ENCODE measurements at regions of chr11 and their contacts with region 1.

Region 1: GRCh38 chr11:14907411-14908213 is 15.6 kb upstream of the CYP2R1 start:
- DNase-seq: peak; percentile 50 to 90 (median 78)
- ATAC-seq: peak; percentile 54 to 66 (median 56)
- H3K4me3 ChIP-seq: no peak overlapping the region
- H3K4me3 Mint-ChIP-seq: no peak overlapping the region
- H3K27ac ChIP-seq: peak overlapping the region; percentile 22
- H3K27ac Mint-ChIP-seq: peak overlapping the region; percentile 7 to 71
- H3K4me1 ChIP-seq: peaks cover 0 to 28% of the 10 kb centered on the region in 2 experiments
- H3K4me1 Mint-ChIP-seq: peaks cover 40 to 46% (median 46%) of the 10 kb centered on the region in 3 donors
- H3K27me3 ChIP-seq: no peaks in the 10 kb centered on the region
- H3K27me3 Mint-ChIP-seq: no peaks in the 10 kb centered on the region

Region 2: GRCh38 chr11:14454861-14455632 is 452.6 kb before region 1 on chr11:
- CTCF ChIA-PET with region 1: interaction called in 1 of 2 experiments, 11 read pairs
- POLR2A ChIA-PET with region 1: no interaction called
- DNase-seq: peak in 2 of 35 experiments; percentile 8 to 58
- ATAC-seq: peak in 2 of 4 experiments; percentile 16 to 52
- H3K4me3 ChIP-seq: no peak overlapping the region
- H3K4me3 Mint-ChIP-seq: no peak overlapping the region
- H3K27ac ChIP-seq: no peak overlapping the region
- H3K27ac Mint-ChIP-seq: no peak overlapping the region
- H3K4me1 ChIP-seq: peaks cover 0 to 4% of the 10 kb centered on the region in 2 experiments
- H3K4me1 Mint-ChIP-seq: peaks cover 0 to 5% (median 0%) of the 10 kb centered on the region in 3 donors
- H3K27me3 ChIP-seq: no peaks in the 10 kb centered on the region
- H3K27me3 Mint-ChIP-seq: no peaks in the 10 kb centered on the region

Region 3: DNA sequence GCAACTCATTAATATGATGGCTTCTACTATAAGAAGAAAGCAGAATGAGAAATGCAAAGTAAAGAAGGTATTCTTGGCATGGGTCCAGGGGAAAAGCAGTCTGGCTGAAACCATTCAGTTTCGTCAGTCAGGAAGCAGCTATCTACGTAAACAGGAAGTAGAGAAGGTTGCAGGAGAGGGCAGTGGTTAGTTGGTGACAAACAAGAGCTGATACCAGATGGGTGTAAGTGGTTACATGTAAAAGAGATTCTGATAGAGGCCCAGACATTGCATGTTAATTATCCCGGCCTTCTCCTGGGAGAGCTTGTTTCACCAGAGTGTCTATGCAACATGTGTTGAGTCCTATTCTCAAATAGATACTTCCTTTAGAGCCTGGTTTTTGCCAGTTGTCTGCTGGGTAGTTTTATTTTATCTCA is 329.1 kb before region 1 on chr11:
- CTCF ChIA-PET with region 1: interaction called in 1 of 2 experiments, 13 read pairs
- POLR2A ChIA-PET with region 1: no interaction called
- DNase-seq: peak; percentile 26 to 96 (median 70)
- ATAC-seq: peak; percentile 98 to 99 (median 98)
- H3K4me3 ChIP-seq: no peak overlapping the region
- H3K4me3 Mint-ChIP-seq: peak overlapping the region; percentile 45 to 63 (median 50)
- H3K27ac ChIP-seq: peak overlapping the region; percentile 91
- H3K27ac Mint-ChIP-seq: peak overlapping the region; percentile 88 to 93
- H3K4me1 ChIP-seq: peaks cover 22 to 35% of the 10 kb centered on the region in 2 experiments
- H3K4me1 Mint-ChIP-seq: peaks cover 60 to 71% (median 68%) of the 10 kb centered on the region in 3 donors
- H3K27me3 ChIP-seq: no peaks in the 10 kb centered on the region
- H3K27me3 Mint-ChIP-seq: no peaks in the 10 kb centered on the region

Region 4: GRCh38 chr11:14789879-14790484 is 117.6 kb before region 1 on chr11:
- CTCF ChIA-PET with region 1: interaction called, 31 to 88 read pairs
- POLR2A ChIA-PET with region 1: no interaction called
- DNase-seq: peak in 1 of 35 experiments; percentile 49
- ATAC-seq: peak in 1 of 4 experiments; percentile 59
- H3K4me3 ChIP-seq: no peak overlapping the region
- H3K4me3 Mint-ChIP-seq: no peak overlapping the region
- H3K27ac ChIP-seq: no peak overlapping the region
- H3K27ac Mint-ChIP-seq: peak overlapping the region in 1 of 2 donors; percentile 47
- H3K4me1 ChIP-seq: no peaks in the 10 kb centered on the region
- H3K4me1 Mint-ChIP-seq: peaks cover 5 to 40% (median 21%) of the 10 kb centered on the region in 3 donors
- H3K27me3 ChIP-seq: no peaks in the 10 kb centered on the region
- H3K27me3 Mint-ChIP-seq: no peaks in the 10 kb centered on the region

Region 5: DNA sequence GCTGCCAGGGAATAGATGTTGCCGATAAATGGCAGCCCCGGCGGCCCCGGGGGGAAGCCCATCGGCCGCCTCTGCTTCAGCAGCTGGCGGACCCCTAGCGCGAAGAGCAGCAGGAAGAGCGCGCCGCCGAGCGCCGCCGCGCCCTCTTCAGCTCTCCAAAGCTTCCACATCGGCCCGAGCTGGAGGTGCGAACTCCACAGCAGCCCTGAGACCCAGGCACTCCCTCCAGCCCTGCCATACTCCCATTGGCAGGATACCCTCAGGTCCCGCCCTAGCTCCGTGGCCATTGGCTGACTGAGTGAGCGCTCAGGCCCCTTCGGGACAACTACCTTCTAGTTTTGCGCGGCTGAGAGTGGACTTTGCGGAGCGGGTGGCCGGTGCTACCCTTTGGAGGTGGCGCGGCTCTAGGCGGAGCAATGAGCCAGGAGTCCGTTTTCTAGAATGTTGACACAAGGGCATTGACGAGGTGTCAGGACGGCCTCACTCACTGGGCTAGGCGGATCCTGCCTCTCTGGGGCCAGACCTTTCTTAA is 15.5 kb before region 1 on chr11 and contains the start of gene CYP2R1:
- CTCF ChIA-PET with region 1: interaction called, 18 to 61 read pairs
- POLR2A ChIA-PET with region 1: interaction called in 1 of 2 experiments, 5 read pairs
- DNase-seq: peak; percentile 78 to 93 (median 87)
- ATAC-seq: peak; percentile 89 to 90 (median 89)
- H3K4me3 ChIP-seq: peak within 1 kb of the TSS; percentile 65 to 80
- H3K4me3 Mint-ChIP-seq: peak within 1 kb of the TSS; percentile 95 to 98 (median 97)
- H3K27ac ChIP-seq: peak within 1 kb of the TSS; percentile 76
- H3K27ac Mint-ChIP-seq: peak within 1 kb of the TSS; percentile 95 to 96
- H3K4me1 ChIP-seq: peaks cover 14 to 24% of the 10 kb centered on the region in 2 experiments
- H3K4me1 Mint-ChIP-seq: peaks cover 44 to 50% (median 47%) of the 10 kb centered on the region in 3 donors
- H3K27me3 ChIP-seq: no peaks in the 10 kb centered on the region
- H3K27me3 Mint-ChIP-seq: no peaks in the 10 kb centered on the region
- total RNA-seq, gene CYP2R1: 17.9 to 23.3 (median 19.1) TPM

Region 6: DNA sequence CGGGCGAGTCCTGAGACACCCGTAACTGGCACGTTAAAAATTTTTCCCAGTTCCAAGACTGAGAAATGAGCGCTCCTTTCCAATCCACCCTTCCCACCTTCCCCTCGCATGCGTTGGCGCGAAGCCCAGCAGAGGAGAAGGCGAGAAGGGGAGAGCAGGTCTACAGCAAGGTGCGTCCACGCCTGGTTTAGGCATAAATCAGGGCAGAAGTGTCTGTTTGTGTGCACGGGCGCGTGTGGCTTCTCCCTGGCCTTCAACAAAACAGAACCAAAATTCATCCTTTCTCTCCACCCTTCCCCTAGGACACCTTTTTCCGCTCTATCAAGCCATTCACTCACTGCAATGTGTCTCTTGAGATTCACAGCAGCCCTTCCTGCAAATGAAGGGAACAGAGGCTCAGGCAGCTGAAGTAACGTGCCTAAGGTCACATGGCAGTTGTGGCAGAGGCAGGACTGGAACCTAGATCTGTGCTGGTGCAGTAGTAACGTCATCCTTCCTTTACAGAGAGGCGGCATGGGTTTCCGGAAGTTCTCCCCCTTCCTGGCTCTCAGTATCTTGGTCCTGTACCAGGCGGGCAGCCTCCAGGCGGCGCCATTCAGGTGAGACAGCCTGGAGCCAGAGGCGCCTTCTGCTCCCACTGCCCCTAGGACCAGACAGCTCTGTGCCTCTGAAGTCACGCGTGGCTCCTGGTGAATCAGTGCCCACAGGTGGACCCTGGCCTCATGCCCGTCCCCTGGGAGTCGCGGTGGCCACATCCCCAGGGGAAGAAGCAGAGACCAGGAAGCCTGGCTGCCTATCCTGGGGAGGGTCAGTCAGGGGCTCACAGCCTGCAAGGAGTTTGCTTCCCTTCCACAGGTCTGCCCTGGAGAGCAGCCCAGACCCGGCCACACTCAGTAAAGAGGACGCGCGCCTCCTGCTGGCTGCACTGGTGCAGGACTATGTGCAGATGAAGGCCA is 166.9 kb after region 1 on chr11:
- CTCF ChIA-PET with region 1: interaction called, 37 to 50 read pairs
- POLR2A ChIA-PET with region 1: no interaction called
- DNase-seq: peak; percentile 53 to 84 (median 74)
- ATAC-seq: peak; percentile 82 to 93 (median 86)
- H3K4me3 ChIP-seq: peak overlapping the region; percentile 41 to 60
- H3K4me3 Mint-ChIP-seq: peak overlapping the region; percentile 74 to 82 (median 78)
- H3K27ac ChIP-seq: no peak overlapping the region
- H3K27ac Mint-ChIP-seq: no peak overlapping the region
- H3K4me1 ChIP-seq: peaks cover 3 to 23% of the 10 kb centered on the region in 2 experiments
- H3K4me1 Mint-ChIP-seq: peaks cover 16 to 22% (median 19%) of the 10 kb centered on the region in 3 donors
- H3K27me3 ChIP-seq: peaks cover 0 to 38% of the 10 kb centered on the region in 2 experiments
- H3K27me3 Mint-ChIP-seq: peaks cover 15 to 28% of the 10 kb centered on the region in 2 donors